Testis (tissue), 5 donors: ENCODE measurements at regions of chr17 and their contacts with region 1.

Region 1: GRCh38 chr17:7004398-7005253 is 7.8 kb upstream of the RNASEK start:
- DNase-seq: no peak
- H3K4me3 ChIP-seq: no peak overlapping the region
- H3K27ac ChIP-seq: no peak overlapping the region
- H3K4me1 ChIP-seq: no peaks in the 10 kb centered on the region
- H3K27me3 ChIP-seq: no peaks in the 10 kb centered on the region
- CTCF ChIP-seq: peak; percentile 25 to 66 (median 46)
- POLR2A ChIP-seq: no peak

Region 2: DNA sequence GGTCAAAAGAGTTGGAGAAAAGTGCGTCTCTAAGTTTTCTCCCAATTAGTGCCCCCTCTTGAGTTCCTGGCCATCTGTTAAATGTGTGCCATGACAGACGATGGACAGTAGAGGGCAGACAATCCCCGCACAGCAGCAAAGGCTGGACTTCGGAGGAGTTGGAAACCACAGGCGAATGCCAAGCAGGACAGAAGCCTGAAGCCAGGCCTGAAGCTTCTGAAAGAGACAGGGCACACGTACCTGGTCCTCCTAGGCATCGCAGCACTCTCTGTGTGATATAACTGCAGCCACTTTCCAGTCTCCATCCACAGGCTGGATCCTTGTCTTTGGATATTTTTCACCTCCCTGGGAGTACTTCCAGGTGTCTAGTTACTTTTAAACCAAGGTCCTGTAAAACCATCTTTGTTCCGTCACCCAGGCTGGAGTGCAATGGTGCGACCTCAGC is 338.5 kb before region 1 on chr17:
- intact Hi-C with region 1: loop called (anchors 10 kb)
- DNase-seq: peak; percentile 85
- H3K4me3 ChIP-seq: no peak overlapping the region
- H3K27ac ChIP-seq: no peak overlapping the region
- H3K4me1 ChIP-seq: no peaks in the 10 kb centered on the region
- H3K27me3 ChIP-seq: no peaks in the 10 kb centered on the region
- CTCF ChIP-seq: peak; percentile 63 to 85 (median 81)
- POLR2A ChIP-seq: no peak